ENCODE measurements at regions of chrX and their contacts with region 1.

Region 1: DNA sequence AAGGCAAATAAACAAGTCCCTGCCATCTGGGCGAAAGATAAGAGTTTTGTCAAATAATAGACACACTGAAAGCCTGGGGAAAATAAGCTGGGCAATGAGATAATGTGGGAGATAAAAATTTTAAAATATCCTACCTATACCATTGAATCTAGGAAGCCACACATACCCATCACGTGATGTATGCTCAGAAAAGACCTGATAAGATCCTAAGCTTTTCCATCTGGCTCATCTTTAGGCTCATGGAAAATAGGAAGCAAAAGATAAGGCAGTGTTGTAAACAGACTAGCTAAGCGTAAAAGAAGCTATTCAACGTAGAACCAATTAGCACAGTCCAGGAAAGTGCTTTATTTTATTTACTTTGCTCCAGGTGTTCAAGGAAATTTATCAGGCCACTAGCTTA is 103.6 kb downstream of the FAM47A start:
- DNase-seq: no peak
- ATAC-seq: peak in 2 of 4 donors; percentile 37 to 60
- H3K4me3 ChIP-seq: no peak overlapping the region
- H3K27ac ChIP-seq: no peak overlapping the region
- H3K4me1 ChIP-seq: no peaks in the 10 kb centered on the region
- H3K27me3 ChIP-seq: peaks cover 0 to 5% (median 0%) of the 10 kb centered on the region in 4 donors
- CTCF ChIP-seq: no peak

Region 2: DNA sequence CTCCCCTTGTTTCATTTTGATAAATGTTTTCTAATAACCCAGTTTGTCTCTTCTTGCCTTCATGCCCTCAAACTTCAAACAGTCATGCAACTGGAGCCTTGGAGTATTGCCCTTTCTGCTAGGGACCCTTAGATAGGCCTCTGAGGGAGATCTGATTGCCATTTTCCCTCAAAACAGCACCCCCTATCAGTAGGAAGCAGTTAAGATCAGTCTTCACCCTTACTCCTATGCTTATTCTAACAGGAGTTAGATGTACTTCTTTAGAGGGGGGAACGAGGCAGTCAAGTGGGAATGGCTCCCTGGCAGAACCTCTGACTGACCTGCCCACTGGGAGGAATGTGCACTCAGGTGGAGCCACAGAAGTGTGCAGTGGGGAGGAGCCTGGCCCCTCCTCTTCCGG is 29.5 kb after region 1 on chrX:
- intact Hi-C with region 1: loop called in 1 of 3 experiments (anchors 5 kb)
- DNase-seq: no peak
- ATAC-seq: no peak
- H3K4me3 ChIP-seq: no peak overlapping the region
- H3K27ac ChIP-seq: no peak overlapping the region
- H3K4me1 ChIP-seq: no peaks in the 10 kb centered on the region
- H3K27me3 ChIP-seq: no peaks in the 10 kb centered on the region
- CTCF ChIP-seq: no peak